ENCODE measurements at regions of chrX and their contacts with region 1.

Region 1: GRCh38 chrX:101206471-101206870 is 13.1 kb upstream of the DRP2 start:
- DNase-seq: no peak
- ATAC-seq: peak in 1 of 8 donors; percentile 43
- H3K4me3 ChIP-seq: no peak overlapping the region
- H3K27ac ChIP-seq: no peak overlapping the region
- H3K4me1 ChIP-seq: no peaks in the 10 kb centered on the region
- H3K27me3 ChIP-seq: peaks cover 0 to 37% (median 0%) of the 10 kb centered on the region in 7 donors
- CTCF ChIP-seq: peak in 6 of 9 donors; percentile 21 to 34 (median 27)

Region 2: DNA sequence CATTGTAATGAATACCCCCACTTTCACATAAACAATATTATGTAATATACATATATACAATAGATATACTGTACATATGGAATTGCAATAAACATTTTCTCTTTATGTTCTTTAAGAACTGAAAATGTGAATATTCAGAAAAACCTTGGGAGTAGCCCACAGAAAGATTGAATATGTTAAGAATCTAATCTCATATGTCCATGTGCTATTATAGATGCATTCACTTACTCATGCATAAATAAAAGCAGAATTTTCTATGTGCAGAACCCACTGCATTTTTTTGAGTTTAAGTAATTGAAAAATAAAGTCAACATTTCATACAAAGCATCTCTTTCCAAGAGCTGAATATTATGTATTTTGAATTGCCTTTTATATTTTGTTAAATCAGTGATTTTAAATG is 1698.7 kb before region 1 on chrX:
- intact Hi-C with region 1: no loop called
- DNase-seq: no peak
- ATAC-seq: no peak
- H3K4me3 ChIP-seq: no peak overlapping the region
- H3K27ac ChIP-seq: no peak overlapping the region
- H3K4me1 ChIP-seq: no peaks in the 10 kb centered on the region
- H3K27me3 ChIP-seq: peaks cover 0 to 4% (median 0%) of the 10 kb centered on the region in 7 donors
- CTCF ChIP-seq: no peak

Region 3: DNA sequence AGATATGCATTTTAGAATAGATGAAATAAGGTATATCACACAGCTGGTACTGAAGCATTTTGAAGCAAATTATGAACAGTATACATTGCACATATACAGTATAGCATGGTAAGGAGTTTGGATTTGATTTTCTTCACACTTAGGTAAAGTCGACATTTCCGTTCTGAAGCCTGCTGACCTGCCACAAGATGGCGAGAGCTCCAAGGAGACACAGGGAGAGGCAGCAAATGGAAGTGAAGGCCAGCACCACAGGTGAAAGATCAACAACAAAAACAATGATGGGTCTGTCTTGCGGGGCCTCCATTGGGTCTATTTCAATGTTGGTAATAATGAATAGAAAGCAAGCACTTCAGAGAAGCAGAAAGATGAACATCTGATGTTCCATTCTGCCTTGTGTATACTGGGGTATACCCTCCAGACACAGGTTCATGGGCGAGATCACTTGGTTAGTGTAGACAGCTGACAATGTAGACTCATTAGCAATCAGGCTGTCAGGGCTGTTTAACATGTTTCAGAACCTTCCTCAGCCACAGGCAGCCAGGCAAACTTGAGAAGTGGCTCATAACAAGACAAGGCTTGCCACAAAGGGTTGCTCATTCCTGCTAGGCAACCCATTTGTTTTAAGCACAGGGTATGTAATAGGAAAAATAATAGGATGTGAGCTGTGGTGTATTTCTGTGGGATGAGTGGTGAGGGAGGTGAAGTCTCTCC is 311.0 kb before region 1 on chrX:
- intact Hi-C with region 1: loop called in 1 of 10 experiments (anchors 10 kb)
- DNase-seq: peak in 1 of 2 donors; percentile 2
- ATAC-seq: peak in 1 of 8 donors; percentile 25
- H3K4me3 ChIP-seq: no peak overlapping the region
- H3K27ac ChIP-seq: no peak overlapping the region
- H3K4me1 ChIP-seq: no peaks in the 10 kb centered on the region
- H3K27me3 ChIP-seq: peaks cover 0 to 14% (median 0%) of the 10 kb centered on the region in 7 donors
- CTCF ChIP-seq: peak in 8 of 9 donors; percentile 14 to 40 (median 28)